Activated B cell treated with CpG ODN at 0.5 μM for 24 hours (primary cell): ENCODE measurements at regions of chr12 and their contacts with region 1.

Region 1: GRCh38 chr12:114684098-114684869 is at the start of gene TBX3:
- DNase-seq: no peak
- ATAC-seq: peak; percentile 57
- H3K4me3 Mint-ChIP-seq: peak within 1 kb of the TSS; percentile 79
- H3K27ac Mint-ChIP-seq: no peak within 1 kb of the TSS
- H3K4me1 Mint-ChIP-seq: peaks cover 23% of the 10 kb centered on the region
- H3K27me3 Mint-ChIP-seq: peaks cover 86% of the 10 kb centered on the region
- CTCF ChIP-seq: no peak
- total RNA-seq, gene TBX3: not detected in 2 replicates

Region 2: GRCh38 chr12:114669401-114670290 is 14.6 kb before region 1 on chr12:
- CTCF ChIA-PET with region 1: no interaction called
- POLR2A ChIA-PET with region 1: no interaction called
- intact Hi-C with region 1: loop called (anchors 2 kb)
- DNase-seq: no peak
- ATAC-seq: no peak
- H3K4me3 Mint-ChIP-seq: no peak overlapping the region
- H3K27ac Mint-ChIP-seq: no peak overlapping the region
- H3K4me1 Mint-ChIP-seq: no peaks in the 10 kb centered on the region
- H3K27me3 Mint-ChIP-seq: peaks cover 62% of the 10 kb centered on the region
- CTCF ChIP-seq: no peak